Posterior vena cava (tissue), 2 donors: ENCODE measurements at regions of chr13 and their contacts with region 1.

Region 1: DNA sequence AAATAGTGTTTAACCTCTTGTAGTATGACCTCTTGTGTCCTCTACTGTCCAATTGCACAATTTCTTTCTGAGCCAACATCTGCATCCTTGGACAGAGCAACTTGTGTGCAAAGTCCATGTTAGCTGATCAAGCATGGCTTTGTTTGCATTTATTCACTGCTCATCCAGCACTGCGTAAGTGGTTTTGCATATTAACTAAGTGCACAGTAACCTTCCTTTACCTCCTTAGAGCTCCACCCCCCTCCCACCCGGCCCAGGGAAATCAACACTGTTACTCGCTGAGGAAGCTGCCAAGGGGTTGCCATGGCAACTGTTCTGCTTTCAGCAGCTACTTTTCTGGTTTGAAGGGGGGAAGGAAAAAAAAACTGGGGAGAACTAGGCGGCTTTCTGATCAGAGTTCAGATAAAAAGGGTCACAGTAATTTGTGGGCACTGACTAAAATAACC is 153.5 kb upstream of the KLF12 start:
- DNase-seq: peak; percentile 91

Region 2: GRCh38 chr13:72745260-72745659 is 1542.5 kb before region 1 on chr13:
- intact Hi-C with region 1: no loop called
- DNase-seq: no peak

Region 3: GRCh38 chr13:74145249-74145975 is 142.3 kb before region 1 on chr13:
- intact Hi-C with region 1: loop called in 1 of 2 experiments (anchors 10 kb)
- DNase-seq: no peak